ENCODE measurements at regions of chr19 and their contacts with region 1.

Region 1: DNA sequence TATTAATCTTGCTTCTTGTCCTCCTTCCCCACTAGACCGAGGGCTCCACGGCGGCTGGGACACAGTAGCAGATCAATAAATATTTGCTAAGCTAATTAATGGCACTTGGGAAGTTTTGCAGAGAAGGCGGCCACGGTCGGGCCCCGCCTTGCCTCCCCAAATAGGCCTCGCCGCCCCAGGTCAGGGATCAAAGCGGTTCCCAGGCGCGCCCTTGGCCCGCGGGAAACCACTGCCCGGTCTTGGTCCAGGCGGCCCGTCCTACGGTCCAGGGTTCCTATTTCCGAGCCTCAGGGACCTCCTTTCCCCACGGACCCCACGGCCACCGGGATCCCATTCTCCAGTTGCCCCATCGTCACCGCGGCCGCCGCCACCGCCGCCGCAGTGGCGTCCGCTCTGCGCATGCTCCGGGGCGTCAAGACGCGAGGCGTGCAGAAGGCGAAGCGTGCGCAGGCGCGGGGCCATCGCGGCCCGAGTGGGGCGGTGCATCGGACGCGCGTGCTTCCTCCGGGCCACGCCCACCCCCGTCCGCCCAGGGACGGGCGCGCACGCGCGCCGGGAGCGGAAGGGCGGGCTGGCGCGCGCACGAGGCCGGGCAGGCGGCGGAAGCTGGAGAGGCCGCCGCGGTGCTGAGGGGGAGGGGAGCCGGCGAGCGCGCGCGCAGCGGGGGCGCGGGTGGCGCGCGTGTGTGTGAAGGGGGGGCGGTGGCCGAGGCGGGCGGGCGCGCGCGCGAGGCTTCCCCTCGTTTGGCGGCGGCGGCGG is at the start of gene SMARCA4:
- DNase-seq: peak; percentile 99
- H3K4me3 Mint-ChIP-seq: peak within 1 kb of the TSS; percentile 89
- H3K27ac Mint-ChIP-seq: peak within 1 kb of the TSS; percentile 87
- H3K4me1 Mint-ChIP-seq: peaks cover 39% of the 10 kb centered on the region
- H3K27me3 Mint-ChIP-seq: peaks cover under 1% of the 10 kb centered on the region
- total RNA-seq, gene SMARCA4: 177 and 178 TPM in 2 replicates

Region 2: GRCh38 chr19:10870955-10871603 is 89.4 kb before region 1 on chr19 and contains the start of gene CARM1:
- intact Hi-C with region 1: loop called (anchors 1 kb)
- DNase-seq: peak; percentile 98
- H3K4me3 Mint-ChIP-seq: peak within 1 kb of the TSS; percentile 88
- H3K27ac Mint-ChIP-seq: peak within 1 kb of the TSS; percentile 93
- H3K4me1 Mint-ChIP-seq: peaks cover 37% of the 10 kb centered on the region
- H3K27me3 Mint-ChIP-seq: no peaks in the 10 kb centered on the region
- total RNA-seq, gene CARM1: 85.9 and 88.0 TPM in 2 replicates

Region 3: DNA sequence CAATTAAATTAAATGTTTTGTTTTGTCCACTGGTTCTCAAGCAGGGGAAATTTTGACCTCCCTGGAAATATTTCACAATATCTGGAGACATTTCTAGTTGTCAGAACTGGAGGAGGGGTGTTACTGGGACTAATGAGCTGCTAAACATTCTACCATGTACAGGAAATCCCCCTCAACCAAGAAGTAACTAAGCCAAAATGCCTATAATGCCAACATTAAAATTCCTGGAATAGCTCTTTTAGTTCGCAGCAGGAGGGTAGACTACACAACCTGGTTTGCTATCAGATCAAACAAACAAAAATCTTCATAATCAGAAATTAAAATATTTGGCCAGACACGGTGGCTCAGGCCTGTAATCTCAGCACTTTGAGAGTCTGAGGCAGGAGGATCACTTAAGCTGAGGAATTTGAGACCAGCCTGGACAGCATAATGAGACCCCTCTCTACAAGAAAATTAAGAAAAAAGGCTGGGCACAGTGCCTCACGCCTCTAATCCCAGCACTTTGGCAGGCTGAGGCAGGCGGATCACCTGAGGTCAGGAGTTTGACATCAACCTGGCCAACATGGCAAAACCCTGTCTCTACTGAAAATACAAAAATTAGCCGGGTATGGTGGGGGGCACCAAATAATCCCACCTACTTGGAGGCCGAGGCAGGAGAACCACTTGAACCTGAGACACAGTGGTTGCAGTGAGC is 13.4 kb before region 1 on chr19:
- intact Hi-C with region 1: loop called (anchors 1 kb)
- DNase-seq: no peak
- H3K4me3 Mint-ChIP-seq: no peak overlapping the region
- H3K27ac Mint-ChIP-seq: no peak overlapping the region
- H3K4me1 Mint-ChIP-seq: peaks cover 6% of the 10 kb centered on the region
- H3K27me3 Mint-ChIP-seq: no peaks in the 10 kb centered on the region

Measured in activated T-helper 1 cell treated with anti-CD3 and anti-CD28 coated beads, Interleukin-12 subunit alpha, Interleukin-12 subunit beta, Interleukin-2, Interleukin-4 antibody, amounts not matched to agents 30 ng/mL and 10 ng/mL and 1 ng/mL, durations not matched to agents 14 hours and 24 hours and 36 hours (primary cell).